Gastrocnemius medialis (tissue), 4 donors: ENCODE measurements at regions of chr13 and their contacts with region 1.

Region 1: GRCh38 chr13:91348906-91349435 is 1.5 kb downstream of the MIR17HG start:
- DNase-seq: peak; percentile 78 to 88
- ATAC-seq: peak; percentile 75
- H3K4me3 ChIP-seq: peak overlapping the region; percentile 40 to 78 (median 72)
- H3K27ac ChIP-seq: peak overlapping the region; percentile 86 to 94 (median 88)
- H3K4me1 ChIP-seq: peaks cover 10 to 20% of the 10 kb centered on the region in 2 donors
- H3K27me3 ChIP-seq: no peaks in the 10 kb centered on the region
- CTCF ChIP-seq: peak; percentile 88 to 99 (median 99)
- POLR2A ChIP-seq: peak; percentile 63 to 70

Region 2: GRCh38 chr13:91398413-91399272 is 49.7 kb after region 1 on chr13 and contains the start of gene GPC5:
- in situ Hi-C with region 1: no loop called
- intact Hi-C with region 1: loop called (anchors 2 kb)
- DNase-seq: peak; percentile 32 to 49
- ATAC-seq: peak; percentile 88 to 91
- H3K4me3 ChIP-seq: peak within 1 kb of the TSS; percentile 42 to 62 (median 52)
- H3K27ac ChIP-seq: no peak within 1 kb of the TSS
- H3K4me1 ChIP-seq: peaks cover 7 to 10% of the 10 kb centered on the region in 2 donors
- H3K27me3 ChIP-seq: peaks cover 32 to 54% (median 38%) of the 10 kb centered on the region in 3 donors
- CTCF ChIP-seq: no peak
- POLR2A ChIP-seq: no peak
- total RNA-seq, gene GPC5: not detected